Naive thymus-derived CD4-positive, alpha-beta T cell (primary cell): ENCODE measurements at regions of chr1 and their contacts with region 1.

Region 1: GRCh38 chr1:61043010-61043820 is 39.1 kb upstream of the NFIA start:
- DNase-seq: peak; percentile 62 to 83 (median 78)
- ATAC-seq: peak; percentile 96
- H3K4me3 ChIP-seq: peak overlapping the region; percentile 35
- H3K4me3 Mint-ChIP-seq: peak overlapping the region; percentile 53 to 88 (median 73)
- H3K27ac ChIP-seq: no peak overlapping the region
- H3K27ac Mint-ChIP-seq: no peak overlapping the region
- H3K4me1 ChIP-seq: peaks cover 3 to 4% of the 10 kb centered on the region in 2 donors
- H3K4me1 Mint-ChIP-seq: peaks cover 0 to 4% (median 0%) of the 10 kb centered on the region in 7 donors
- H3K27me3 ChIP-seq: peaks cover 0 to 8% of the 10 kb centered on the region in 2 donors
- H3K27me3 Mint-ChIP-seq: peaks cover 28 to 67% (median 38%) of the 10 kb centered on the region in 5 donors

Region 2: DNA sequence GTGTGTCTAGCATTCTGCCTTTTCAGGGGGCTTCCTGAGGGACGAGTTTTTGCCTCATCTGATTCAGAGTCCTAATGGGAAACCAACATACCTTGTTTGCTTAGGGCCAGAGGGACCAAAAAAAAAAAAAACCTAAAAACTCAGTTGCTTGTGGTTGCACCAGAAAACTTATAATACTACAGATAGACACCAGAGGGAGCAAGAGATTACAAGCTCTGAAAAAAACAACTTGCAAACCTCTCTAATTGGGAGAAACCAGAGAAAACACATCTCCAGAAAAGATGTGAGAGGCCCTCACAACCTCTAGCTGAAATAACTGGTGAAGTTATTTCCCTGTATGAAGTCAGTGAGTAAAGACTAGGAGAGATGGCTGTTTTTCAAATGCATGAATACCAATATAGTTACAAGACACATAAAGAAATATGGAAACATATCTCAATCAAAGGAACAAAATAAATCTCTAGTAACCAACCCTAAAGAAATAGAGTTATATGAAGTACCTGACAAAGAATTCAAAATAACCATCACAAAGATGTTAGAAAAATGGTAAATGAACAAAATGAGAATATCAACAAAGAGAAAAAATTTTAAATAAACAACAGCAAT is 194.5 kb before region 1 on chr1:
- CTCF ChIA-PET with region 1: no interaction called
- POLR2A ChIA-PET with region 1: no interaction called
- intact Hi-C with region 1: loop called (anchors 1 to 5 kb)
- DNase-seq: no peak
- ATAC-seq: no peak
- H3K4me3 ChIP-seq: no peak overlapping the region
- H3K4me3 Mint-ChIP-seq: no peak overlapping the region
- H3K27ac ChIP-seq: no peak overlapping the region
- H3K27ac Mint-ChIP-seq: no peak overlapping the region
- H3K4me1 ChIP-seq: no peaks in the 10 kb centered on the region
- H3K4me1 Mint-ChIP-seq: no peaks in the 10 kb centered on the region
- H3K27me3 ChIP-seq: no peaks in the 10 kb centered on the region
- H3K27me3 Mint-ChIP-seq: peaks cover 6 to 32% (median 28%) of the 10 kb centered on the region in 5 donors

Region 3: DNA sequence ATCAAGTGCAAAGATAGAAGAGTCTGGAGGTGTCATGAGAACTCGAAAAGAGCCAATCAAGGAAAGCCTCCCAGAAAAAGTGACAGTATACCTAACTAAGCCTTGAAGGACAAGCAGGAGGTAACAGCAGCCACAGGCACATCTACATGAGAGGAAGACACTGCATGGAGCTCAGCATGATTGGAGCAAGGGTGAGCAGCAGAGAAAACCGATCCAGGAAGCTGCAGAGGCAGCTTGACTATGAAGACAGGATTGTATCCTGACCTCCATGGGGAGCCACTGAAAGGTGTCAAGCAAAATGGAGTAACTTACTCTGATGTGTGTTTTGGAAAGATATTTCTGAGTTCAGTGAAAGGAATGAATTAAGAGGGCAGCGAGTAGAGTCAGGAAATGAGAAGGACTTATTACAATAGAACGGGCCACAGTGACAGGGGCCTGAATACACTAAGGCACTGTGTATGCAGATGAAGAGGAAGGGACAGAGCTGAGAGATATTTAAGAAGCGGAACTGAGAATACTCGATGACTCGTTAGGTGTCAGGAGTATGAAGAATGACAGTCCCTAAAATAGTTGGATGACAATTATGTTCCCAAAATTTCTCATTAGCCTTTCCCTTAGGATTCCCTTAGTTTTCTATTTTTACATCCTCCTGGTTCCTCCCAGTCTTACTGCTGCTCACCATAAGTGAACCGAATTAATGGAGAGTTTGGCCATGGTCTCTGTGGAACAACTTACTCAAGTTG is 100.1 kb before region 1 on chr1:
- CTCF ChIA-PET with region 1: no interaction called
- POLR2A ChIA-PET with region 1: no interaction called
- intact Hi-C with region 1: no loop called
- DNase-seq: no peak
- ATAC-seq: peak; percentile 67
- H3K4me3 ChIP-seq: no peak overlapping the region
- H3K4me3 Mint-ChIP-seq: no peak overlapping the region
- H3K27ac ChIP-seq: no peak overlapping the region
- H3K27ac Mint-ChIP-seq: no peak overlapping the region
- H3K4me1 ChIP-seq: no peaks in the 10 kb centered on the region
- H3K4me1 Mint-ChIP-seq: no peaks in the 10 kb centered on the region
- H3K27me3 ChIP-seq: no peaks in the 10 kb centered on the region
- H3K27me3 Mint-ChIP-seq: peaks cover 10 to 32% (median 19%) of the 10 kb centered on the region in 5 donors